IMR-90 (cell line): ENCODE measurements at regions of chr11 and their contacts with region 1.

Region 1: DNA sequence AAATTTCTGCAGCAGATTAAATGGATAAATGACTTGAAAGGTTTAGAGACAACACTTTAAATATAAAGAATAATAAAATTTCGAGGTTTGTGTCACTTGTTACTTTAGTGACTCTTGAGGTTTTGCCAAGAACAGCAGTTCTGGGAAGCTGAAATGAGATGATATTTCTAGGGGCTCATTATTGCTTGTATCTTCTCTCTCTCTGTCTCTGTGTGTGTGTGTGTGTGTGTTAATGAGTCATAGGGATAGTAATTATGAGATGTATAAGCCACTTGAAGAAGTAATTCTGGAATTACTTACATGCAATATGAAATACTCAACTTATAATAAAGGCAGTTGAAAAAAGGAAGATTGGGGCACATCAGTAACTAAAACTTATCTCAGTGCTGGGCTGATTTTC is 9.6 kb upstream of the OR10G7 start:
- DNase-seq: no peak
- ATAC-seq: no peak
- H3K4me3 ChIP-seq: no peak overlapping the region
- H3K27ac ChIP-seq: no peak overlapping the region
- H3K4me1 ChIP-seq: no peaks in the 10 kb centered on the region
- H3K27me3 ChIP-seq: no peaks in the 10 kb centered on the region
- CTCF ChIP-seq: no peak
- POLR2A ChIP-seq: no peak
- RAD21 ChIP-seq: no peak

Region 2: DNA sequence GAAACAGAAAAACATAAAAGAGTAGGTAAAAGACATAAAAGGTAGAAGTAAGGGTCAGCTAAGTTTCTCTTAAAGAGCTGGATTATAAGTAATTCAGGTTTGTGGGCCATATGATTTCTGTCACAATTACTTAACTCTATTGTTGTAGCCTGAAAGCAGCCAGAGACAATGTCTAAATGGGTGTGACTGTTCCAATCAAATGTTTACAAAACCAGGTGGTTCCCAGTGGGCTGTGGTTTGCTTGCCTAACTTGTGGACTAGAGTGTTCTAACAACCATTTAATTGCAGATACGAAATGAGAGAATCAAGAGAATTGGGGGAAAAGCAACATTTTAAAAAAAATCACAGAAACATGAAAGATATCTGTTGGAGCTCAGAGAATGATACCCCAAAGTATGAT is 267.2 kb before region 1 on chr11:
- CTCF ChIA-PET with region 1: no interaction called
- POLR2A ChIA-PET with region 1: no interaction called
- dilution Hi-C with region 1: no loop called
- in situ Hi-C with region 1: no loop called
- intact Hi-C with region 1: loop called (anchors 10 kb)
- DNase-seq: no peak
- ATAC-seq: no peak
- H3K4me3 ChIP-seq: no peak overlapping the region
- H3K27ac ChIP-seq: no peak overlapping the region
- H3K4me1 ChIP-seq: no peaks in the 10 kb centered on the region
- H3K27me3 ChIP-seq: no peaks in the 10 kb centered on the region; the same call in 1 of the 2 replicates
- CTCF ChIP-seq: no peak
- POLR2A ChIP-seq: no peak
- RAD21 ChIP-seq: no peak

Region 3: GRCh38 chr11:124012697-124013096 is 38.1 kb before region 1 on chr11 and contains the start of gene OR10G4:
- CTCF ChIA-PET with region 1: no interaction called
- POLR2A ChIA-PET with region 1: no interaction called
- dilution Hi-C with region 1: no loop called
- in situ Hi-C with region 1: no loop called
- intact Hi-C with region 1: no loop called
- DNase-seq: no peak
- ATAC-seq: no peak
- H3K4me3 ChIP-seq: no peak within 1 kb of the TSS
- H3K27ac ChIP-seq: no peak within 1 kb of the TSS
- H3K4me1 ChIP-seq: no peaks in the 10 kb centered on the region
- H3K27me3 ChIP-seq: no peaks in the 10 kb centered on the region
- CTCF ChIP-seq: no peak
- POLR2A ChIP-seq: no peak
- RAD21 ChIP-seq: no peak
- total RNA-seq, gene OR10G4: not detected in 2 replicates